Heart right ventricle (tissue), 16 donors: ENCODE measurements at regions of chr10 and their contacts with region 1.

Region 1: GRCh38 chr10:72215652-72216549 is at the starts of genes ANAPC16 and ASCC1:
- DNase-seq: peak; percentile 91 to 93
- ATAC-seq: peak; percentile 97 to 98 (median 98)
- H3K4me3 ChIP-seq: peak within 1 kb of the TSS; percentile 23 to 84 (median 70)
- H3K27ac ChIP-seq: peak within 1 kb of the TSS; percentile 89 to 99 (median 98)
- H3K4me1 ChIP-seq: peaks cover 10 to 49% (median 39%) of the 10 kb centered on the region in 9 donors
- H3K27me3 ChIP-seq: no peaks in the 10 kb centered on the region
- CTCF ChIP-seq: peak in 2 of 9 donors; percentile 6 to 8
- total RNA-seq, gene ANAPC16: 181 to 246 (median 221) TPM
- total RNA-seq, gene ASCC1: 25.2 to 40.5 (median 33.0) TPM

Region 2: DNA sequence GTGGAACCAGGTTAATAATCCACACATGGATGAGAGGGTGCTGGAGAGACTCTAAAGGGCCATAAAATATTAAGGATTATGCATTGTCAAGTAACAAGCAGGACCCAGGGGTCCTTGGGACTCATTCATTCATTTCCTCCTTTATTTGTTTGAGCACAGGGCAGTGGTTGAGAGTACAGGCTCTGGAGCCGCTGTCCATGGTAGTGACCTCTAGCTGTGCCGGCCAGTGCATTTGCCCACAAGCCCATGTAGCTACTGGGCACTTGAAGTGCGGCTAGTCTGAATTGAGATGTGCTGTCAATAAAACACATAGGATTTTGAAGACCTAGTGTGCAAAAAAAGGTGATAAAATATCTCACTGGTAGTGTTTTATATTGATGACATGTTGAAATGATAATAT is 633.9 kb before region 1 on chr10:
- intact Hi-C with region 1: no loop called
- DNase-seq: peak in 1 of 2 donors; percentile 24
- ATAC-seq: peak in 3 of 8 donors; percentile 55 to 69 (median 68)
- H3K4me3 ChIP-seq: no peak overlapping the region
- H3K27ac ChIP-seq: no peak overlapping the region
- H3K4me1 ChIP-seq: no peaks in the 10 kb centered on the region
- H3K27me3 ChIP-seq: peaks cover 0 to 8% (median 0%) of the 10 kb centered on the region in 7 donors
- CTCF ChIP-seq: no peak

Region 3: DNA sequence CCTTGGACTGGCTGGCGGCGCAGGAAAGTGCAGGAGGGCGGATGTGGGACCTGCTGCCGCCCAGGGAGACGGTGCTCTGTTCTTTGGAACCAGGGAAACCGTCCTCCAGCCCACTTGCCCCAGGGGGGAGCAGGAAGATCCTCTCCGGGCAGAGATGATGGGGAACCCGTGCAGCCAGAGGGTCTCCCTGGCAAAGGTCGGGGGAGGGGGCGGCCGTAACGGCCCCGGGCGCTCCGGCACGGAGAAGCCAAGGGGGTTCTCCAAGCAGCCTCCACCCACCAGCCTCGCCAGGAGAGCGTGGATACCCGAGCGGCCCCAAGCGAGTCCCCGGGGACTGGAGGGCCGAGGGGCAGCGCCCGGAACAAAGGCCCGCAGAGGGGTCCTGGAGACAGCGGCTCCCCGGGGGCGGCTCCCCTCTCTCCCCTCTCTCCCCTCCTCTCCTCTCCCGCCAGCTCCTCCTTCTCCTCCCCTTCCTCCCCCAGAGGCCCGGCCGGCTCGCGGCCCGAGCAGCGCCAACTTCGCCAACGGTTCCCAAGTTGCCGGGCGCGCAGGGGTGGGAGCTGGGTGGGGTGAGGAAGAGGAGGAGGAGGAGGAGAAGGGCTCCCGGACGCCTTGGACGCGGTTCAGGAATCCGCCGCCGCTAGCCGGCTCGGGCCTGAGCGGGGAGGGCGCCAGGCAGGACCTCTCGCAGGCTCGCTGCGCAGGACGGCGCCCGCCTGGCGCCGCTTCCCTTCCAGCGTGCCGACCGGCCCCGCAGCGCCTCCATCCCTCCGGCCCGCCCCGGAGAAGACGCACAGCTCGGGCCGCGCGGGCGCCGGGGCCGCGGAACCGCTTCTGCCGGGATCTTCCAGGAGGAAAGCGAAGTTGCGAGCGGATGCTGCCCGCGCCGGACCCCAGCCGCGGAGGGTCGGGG is 251.9 kb before region 1 on chr10 and contains the start of gene CHST3:
- intact Hi-C with region 1: loop called in 5 of 10 experiments (anchors 5 to 10 kb)
- DNase-seq: peak; percentile 85 to 88
- ATAC-seq: peak; percentile 77 to 91 (median 86)
- H3K4me3 ChIP-seq: peak within 1 kb of the TSS; percentile 67 to 95 (median 84)
- H3K27ac ChIP-seq: peak within 1 kb of the TSS; percentile 92 to 100 (median 98)
- H3K4me1 ChIP-seq: peaks cover 11 to 58% (median 44%) of the 10 kb centered on the region in 9 donors
- H3K27me3 ChIP-seq: peaks cover 0 to 28% (median 0%) of the 10 kb centered on the region in 7 donors
- CTCF ChIP-seq: peak in 2 of 9 donors; percentile 3 to 27
- total RNA-seq, gene CHST3: 14.5 to 28.7 (median 21.3) TPM

Region 4: GRCh38 chr10:72069751-72070526 is 146.0 kb before region 1 on chr10:
- intact Hi-C with region 1: loop called in 2 of 10 experiments (anchors 10 kb)
- DNase-seq: no peak
- ATAC-seq: no peak
- H3K4me3 ChIP-seq: no peak overlapping the region
- H3K27ac ChIP-seq: no peak overlapping the region
- H3K4me1 ChIP-seq: peaks cover 0 to 53% (median 30%) of the 10 kb centered on the region in 9 donors
- H3K27me3 ChIP-seq: no peaks in the 10 kb centered on the region
- CTCF ChIP-seq: peak in 4 of 9 donors; percentile 11 to 24 (median 14)

Region 5: DNA sequence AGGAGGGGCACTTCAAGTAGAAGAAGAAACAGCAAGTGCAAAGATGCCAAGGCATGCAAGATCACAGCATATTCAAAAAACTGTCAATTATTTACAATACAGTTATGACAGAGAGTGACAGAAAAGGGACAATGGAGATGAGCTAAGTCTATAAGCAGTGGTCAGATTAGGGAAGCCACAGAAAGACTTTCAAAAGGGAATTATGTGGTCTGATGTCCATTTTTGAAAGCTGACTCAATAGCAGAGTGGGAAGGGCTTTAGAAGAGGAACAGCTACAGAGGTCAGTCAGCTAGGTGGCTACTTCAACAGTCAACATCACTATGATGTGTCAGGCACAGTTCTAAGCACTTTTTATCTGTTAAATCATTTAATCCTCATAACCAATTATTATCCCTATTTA is 82.4 kb before region 1 on chr10:
- intact Hi-C with region 1: loop called in 7 of 10 experiments (anchors 5 to 10 kb)
- DNase-seq: no peak
- ATAC-seq: peak in 5 of 8 donors; percentile 26 to 57 (median 51)
- H3K4me3 ChIP-seq: no peak overlapping the region
- H3K27ac ChIP-seq: no peak overlapping the region
- H3K4me1 ChIP-seq: peaks cover 0 to 24% (median 4%) of the 10 kb centered on the region in 9 donors
- H3K27me3 ChIP-seq: no peaks in the 10 kb centered on the region
- CTCF ChIP-seq: no peak

Region 6: DNA sequence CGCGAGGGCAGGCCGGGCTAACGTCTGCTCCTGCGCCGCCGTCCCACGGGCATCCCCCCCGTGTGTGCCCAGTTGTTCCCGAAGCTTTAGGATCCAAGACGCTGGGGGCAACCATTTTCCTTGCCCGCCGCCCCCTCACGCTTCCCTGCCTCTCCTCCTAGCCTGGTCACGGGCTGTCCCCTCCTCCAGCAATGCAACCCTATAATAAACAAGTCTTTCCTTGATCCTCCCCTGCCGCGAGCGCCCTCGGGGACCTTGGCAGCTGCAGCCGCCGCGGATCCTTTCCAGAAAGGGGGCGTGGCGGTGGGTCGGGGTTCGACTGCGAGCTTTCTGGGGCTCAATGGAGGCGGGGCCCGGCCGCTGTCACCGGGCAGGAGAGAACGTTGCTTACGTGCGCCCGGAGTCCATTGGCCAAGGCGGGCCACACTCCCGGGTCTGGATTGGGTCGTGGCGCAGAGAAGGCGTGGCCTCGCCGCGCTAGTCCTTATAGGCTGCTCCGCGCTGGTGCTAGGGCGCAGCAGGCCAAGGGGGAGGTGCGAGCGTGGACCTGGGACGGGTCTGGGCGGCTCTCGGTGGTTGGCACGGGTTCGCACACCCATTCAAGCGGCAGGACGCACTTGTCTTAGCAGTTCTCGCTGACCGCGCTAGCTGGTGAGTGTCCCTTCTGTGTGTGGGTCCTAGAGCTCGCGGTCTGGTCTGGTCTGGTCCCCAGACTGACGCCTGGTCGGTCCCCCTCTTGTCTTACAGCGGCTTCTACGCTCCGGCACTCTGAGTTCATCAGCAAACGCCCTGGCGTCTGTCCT is 57.7 kb after region 1 on chr10 and contains the start of gene DDIT4:
- intact Hi-C with region 1: loop called in 4 of 10 experiments (anchors 1 to 5 kb)
- DNase-seq: peak; percentile 99 to 100
- ATAC-seq: peak; percentile 90 to 95 (median 94)
- H3K4me3 ChIP-seq: peak within 1 kb of the TSS; percentile 55 to 96 (median 82)
- H3K27ac ChIP-seq: peak within 1 kb of the TSS; percentile 93 to 100 (median 98)
- H3K4me1 ChIP-seq: peaks cover 0 to 52% (median 45%) of the 10 kb centered on the region in 9 donors
- H3K27me3 ChIP-seq: no peaks in the 10 kb centered on the region
- CTCF ChIP-seq: no peak
- total RNA-seq, gene DDIT4: 13.6 to 102 (median 30.2) TPM